ENCODE measurements at regions of chr10 and their contacts with region 1.

Region 1: GRCh38 chr10:84537447-84537931 is 209.1 kb downstream of the CCSER2 start:
- DNase-seq: no peak
- H3K4me3 ChIP-seq: no peak overlapping the region
- H3K27ac ChIP-seq: no peak overlapping the region
- H3K4me1 ChIP-seq: peaks cover 6% of the 10 kb centered on the region
- H3K27me3 ChIP-seq: no peaks in the 10 kb centered on the region
- CTCF ChIP-seq: peak; percentile 71 to 86 (median 82)
- POLR2A ChIP-seq: no peak

Region 2: DNA sequence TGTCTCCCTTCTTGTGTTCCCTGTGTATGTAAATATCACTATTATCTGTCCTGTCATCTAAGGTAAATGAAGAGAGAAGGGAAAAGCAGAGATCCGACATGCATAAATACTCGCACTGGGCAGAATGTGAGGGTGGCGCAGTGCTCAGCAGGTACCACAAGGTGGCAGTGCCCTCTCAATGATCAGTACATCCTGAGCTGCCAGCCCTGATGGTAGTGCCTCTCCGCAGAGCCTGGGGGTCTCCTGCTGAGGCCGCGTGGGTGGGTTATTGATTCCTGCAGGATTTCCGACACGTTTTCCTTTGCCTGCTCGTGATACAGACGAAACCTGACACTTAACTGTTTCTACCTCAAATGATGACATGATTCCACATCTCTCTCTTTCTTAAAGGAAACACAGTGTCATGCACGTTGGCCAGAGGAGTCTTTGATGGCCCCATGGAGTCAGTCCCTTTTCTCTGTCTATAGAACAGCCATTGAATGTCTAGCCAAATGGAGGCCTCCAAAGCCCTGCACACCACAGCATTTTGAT is 272.8 kb before region 1 on chr10:
- intact Hi-C with region 1: loop called (anchors 5 kb)
- DNase-seq: peak; percentile 80 to 93
- H3K4me3 ChIP-seq: no peak overlapping the region
- H3K27ac ChIP-seq: no peak overlapping the region
- H3K4me1 ChIP-seq: no peaks in the 10 kb centered on the region
- H3K27me3 ChIP-seq: no peaks in the 10 kb centered on the region
- CTCF ChIP-seq: peak; percentile 71 to 84 (median 82)
- POLR2A ChIP-seq: no peak

Region 3: GRCh38 chr10:84360637-84361365 is 176.7 kb before region 1 on chr10:
- intact Hi-C with region 1: no loop called
- DNase-seq: no peak
- H3K4me3 ChIP-seq: peak overlapping the region; percentile 15 to 16
- H3K27ac ChIP-seq: peak overlapping the region; percentile 9
- H3K4me1 ChIP-seq: peaks cover 51% of the 10 kb centered on the region
- H3K27me3 ChIP-seq: no peaks in the 10 kb centered on the region
- CTCF ChIP-seq: no peak
- POLR2A ChIP-seq: no peak

Region 4: DNA sequence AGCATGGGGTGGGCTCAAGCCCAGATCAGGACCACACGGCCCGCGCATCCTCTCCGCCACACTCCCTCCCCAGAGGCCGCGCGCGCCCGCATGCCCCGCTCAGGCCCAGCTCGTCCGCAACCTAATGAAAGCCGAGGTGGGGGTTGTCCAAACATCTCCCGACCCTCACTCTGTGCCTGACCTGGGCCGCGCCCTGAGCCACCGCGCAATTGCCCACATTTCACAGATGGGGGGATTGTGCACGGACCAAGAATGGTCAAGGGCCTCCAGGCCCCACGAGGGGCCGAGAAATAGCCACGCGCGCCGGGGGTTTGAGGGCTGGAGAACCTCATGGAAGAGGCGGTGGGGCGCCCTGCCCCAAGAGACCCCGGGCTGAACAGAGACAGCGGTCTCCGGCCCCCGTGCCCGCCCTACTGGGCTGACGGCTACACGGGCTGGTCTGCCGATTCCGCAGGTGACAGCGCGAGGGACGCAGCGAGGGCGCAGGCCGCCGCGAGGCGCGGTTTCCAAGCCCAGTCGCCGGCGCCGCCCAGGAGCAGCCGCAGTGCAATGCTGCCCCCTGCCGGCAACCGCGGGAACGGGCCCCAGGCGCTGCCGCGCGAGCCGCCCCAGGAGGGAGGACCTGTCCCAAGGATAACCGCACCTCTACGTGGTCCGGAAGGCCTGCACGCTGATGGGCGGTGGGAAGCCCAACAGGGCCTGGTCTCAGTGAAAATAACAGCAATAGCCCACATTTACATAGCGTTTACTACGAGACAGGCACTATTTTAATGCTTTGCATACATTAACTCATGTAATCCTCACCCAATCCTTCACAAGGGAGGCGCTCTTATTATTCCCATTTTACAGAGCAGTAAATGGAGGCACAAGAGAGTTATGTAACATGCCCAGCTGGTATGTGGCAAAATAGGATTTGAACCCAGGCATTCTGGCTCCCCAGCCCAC is 1839.6 kb after region 1 on chr10:
- intact Hi-C with region 1: loop called (anchors 2 kb)
- DNase-seq: peak; percentile 80 to 94
- H3K4me3 ChIP-seq: peak overlapping the region in 1 of 2 donors; percentile 17
- H3K27ac ChIP-seq: no peak overlapping the region
- H3K4me1 ChIP-seq: peaks cover 7% of the 10 kb centered on the region
- H3K27me3 ChIP-seq: no peaks in the 10 kb centered on the region
- CTCF ChIP-seq: peak; percentile 92 to 99 (median 92)
- POLR2A ChIP-seq: no peak